ENCODE measurements at regions of chr17 and their contacts with region 1.

Region 1: DNA sequence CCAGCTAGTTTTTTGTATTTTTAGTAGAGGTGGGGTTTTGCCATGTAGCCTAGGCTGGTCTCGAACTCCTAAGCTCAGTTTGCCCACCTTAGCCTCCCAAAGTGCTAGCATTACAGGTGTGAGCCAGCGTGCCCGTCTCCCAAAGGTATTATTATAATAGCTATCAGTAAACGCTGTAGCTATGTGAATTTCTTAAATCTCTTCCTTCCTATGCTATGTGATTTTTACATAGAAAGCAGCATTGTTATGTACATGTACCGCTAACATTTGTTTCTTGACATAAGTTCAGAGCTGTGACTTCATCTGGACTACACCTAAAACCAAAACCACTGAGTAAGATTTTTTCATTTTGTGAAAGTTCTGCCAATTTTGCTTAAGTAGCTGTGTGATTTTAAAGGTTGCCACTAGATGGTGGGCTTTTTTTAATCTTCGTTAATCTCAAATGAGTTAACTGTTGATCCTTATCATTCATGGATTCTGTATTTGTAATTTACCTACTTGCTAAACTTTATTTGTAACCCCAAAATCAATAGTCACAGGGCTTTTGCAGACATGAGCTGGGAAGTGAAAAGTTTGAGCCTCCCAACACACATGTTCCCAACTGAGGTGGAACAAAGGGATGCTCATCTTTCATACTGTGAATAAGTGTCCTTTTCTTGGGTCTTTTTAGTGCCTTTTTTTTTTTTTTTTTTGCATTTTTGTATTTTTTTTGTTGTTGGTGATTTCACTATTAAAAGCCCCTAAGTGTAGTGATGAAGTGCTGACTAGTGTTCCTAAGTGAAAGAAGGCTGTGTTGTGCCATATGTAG is 21.9 kb downstream of the PRKAR1A start:
- DNase-seq: no peak
- H3K4me3 ChIP-seq: no peak overlapping the region
- H3K27ac ChIP-seq: no peak overlapping the region
- H3K27me3 ChIP-seq: no peaks in the 10 kb centered on the region
- CTCF ChIP-seq: peak; percentile 57

Region 2: GRCh38 chr17:68457539-68458259 is 76.4 kb before region 1 on chr17:
- CTCF ChIA-PET with region 1: no interaction called
- POLR2A ChIA-PET with region 1: no interaction called
- DNase-seq: peak; percentile 94
- H3K4me3 ChIP-seq: peak overlapping the region; percentile 68
- H3K27ac ChIP-seq: peak overlapping the region; percentile 76
- H3K27me3 ChIP-seq: peaks cover 16% of the 10 kb centered on the region
- CTCF ChIP-seq: no peak

Region 3: GRCh38 chr17:68613739-68614298 is 79.7 kb after region 1 on chr17:
- CTCF ChIA-PET with region 1: interaction called, 13 read pairs
- POLR2A ChIA-PET with region 1: no interaction called
- DNase-seq: no peak
- H3K4me3 ChIP-seq: no peak overlapping the region
- H3K27ac ChIP-seq: no peak overlapping the region
- H3K27me3 ChIP-seq: no peaks in the 10 kb centered on the region
- CTCF ChIP-seq: peak; percentile 51

Region 4: DNA sequence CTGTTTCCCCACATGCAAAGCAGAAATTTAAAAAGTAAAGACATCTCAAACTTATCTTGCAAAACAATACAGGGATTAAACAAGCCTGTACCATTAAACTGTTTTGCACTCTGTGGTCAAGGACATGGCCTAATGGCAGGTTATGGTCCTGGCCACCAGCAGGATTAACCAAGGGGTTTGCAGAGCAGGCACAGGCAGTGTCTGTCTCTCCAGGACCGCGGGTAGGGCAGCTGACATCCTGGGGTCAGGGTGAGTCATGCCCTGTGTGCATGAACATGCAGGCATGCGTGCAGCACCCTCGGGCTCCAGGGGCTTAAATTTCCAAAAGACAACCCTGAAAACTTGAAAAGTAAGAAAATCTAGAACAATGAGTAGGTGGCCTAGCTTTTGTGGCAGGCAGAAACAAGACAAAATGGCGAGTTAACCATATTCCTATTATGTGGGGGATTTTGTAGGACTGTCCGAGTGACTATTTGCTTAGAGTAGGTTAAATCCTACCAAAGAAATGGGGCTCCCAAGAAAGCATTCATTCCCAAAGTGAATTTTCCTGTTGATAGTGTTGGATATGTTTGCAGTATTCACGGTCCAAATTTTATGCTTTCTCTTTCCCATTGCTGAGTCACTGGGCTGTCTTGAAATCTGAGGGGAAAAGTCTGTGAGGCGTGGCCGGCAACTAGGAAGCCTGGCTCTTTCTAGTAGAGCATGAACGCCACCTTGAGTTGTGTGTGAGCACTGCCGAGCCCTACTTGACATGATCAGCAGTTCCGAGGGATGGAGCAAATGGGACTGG is 225.4 kb after region 1 on chr17:
- CTCF ChIA-PET with region 1: interaction called, 37 read pairs
- POLR2A ChIA-PET with region 1: no interaction called
- DNase-seq: peak; percentile 86
- H3K4me3 ChIP-seq: peak overlapping the region; percentile 50
- H3K27ac ChIP-seq: peak overlapping the region; percentile 88
- H3K27me3 ChIP-seq: no peaks in the 10 kb centered on the region
- CTCF ChIP-seq: peak; percentile 99

Measured in AG04450 (cell line).